ENCODE measurements at regions of chr20 and their contacts with region 1.

Region 1: GRCh38 chr20:52722926-52723688 is 249.1 kb upstream of the TSHZ2 start:
- DNase-seq: no peak

Region 2: GRCh38 chr20:52738081-52738480 is 15.0 kb after region 1 on chr20:
- CTCF ChIA-PET with region 1: no interaction called
- POLR2A ChIA-PET with region 1: no interaction called
- DNase-seq: no peak

Region 3: DNA sequence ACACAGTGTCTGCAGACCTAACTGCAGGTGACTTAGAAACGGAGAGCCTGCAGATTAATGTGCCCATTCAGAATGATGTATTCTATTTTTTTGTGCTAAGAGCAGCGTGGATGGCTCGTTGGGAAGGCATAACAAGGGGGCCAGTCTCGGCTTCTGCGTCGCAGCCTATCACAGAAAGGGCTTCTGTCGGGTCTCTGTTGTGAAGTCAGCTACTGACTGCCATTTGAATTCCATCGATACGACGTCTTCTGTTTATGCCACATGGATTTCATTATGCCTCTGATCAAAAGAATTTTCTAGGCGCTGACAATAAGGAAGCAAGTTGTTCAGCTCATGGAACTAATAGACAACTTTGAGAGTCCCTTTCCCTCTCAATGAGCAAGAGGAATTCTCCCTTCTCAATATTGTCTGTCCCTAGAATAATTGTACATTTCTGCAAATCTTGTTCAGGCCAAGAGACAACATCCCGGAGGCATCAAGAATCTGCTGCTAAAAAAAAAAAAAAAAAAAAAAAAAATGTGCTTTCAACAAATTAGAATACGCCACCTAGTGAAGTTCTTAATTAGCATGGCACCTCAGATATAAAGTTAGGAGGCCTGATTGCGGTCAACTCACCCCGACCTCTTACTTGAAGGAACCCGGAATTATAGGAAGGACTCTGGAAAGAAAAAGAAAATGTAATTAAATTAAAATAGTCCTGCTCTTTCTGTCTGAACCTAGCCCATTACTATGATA is 472.9 kb after region 1 on chr20:
- CTCF ChIA-PET with region 1: interaction called, 10 read pairs
- POLR2A ChIA-PET with region 1: no interaction called
- DNase-seq: no peak